Activated T-helper 1 cell treated with anti-CD3 and anti-CD28 coated beads, Interleukin-12 subunit alpha, Interleukin-12 subunit beta, Interleukin-2, Interleukin-4 antibody, amounts not matched to agents 30 ng/mL and 10 ng/mL and 1 ng/mL, durations not matched to agents 14 hours and 24 hours and 36 hours (primary cell): ENCODE measurements at regions of chr4 and their contacts with region 1.

Region 1: GRCh38 chr4:65651031-65651430 is 19.3 kb downstream of the EPHA5 start:
- DNase-seq: no peak
- H3K4me3 Mint-ChIP-seq: no peak overlapping the region
- H3K27ac Mint-ChIP-seq: no peak overlapping the region
- H3K4me1 Mint-ChIP-seq: no peaks in the 10 kb centered on the region
- H3K27me3 Mint-ChIP-seq: no peaks in the 10 kb centered on the region

Region 2: GRCh38 chr4:63965875-63966274 is 1685.2 kb before region 1 on chr4:
- intact Hi-C with region 1: loop called (anchors 5 kb)
- DNase-seq: no peak
- H3K4me3 Mint-ChIP-seq: no peak overlapping the region
- H3K27ac Mint-ChIP-seq: no peak overlapping the region
- H3K4me1 Mint-ChIP-seq: no peaks in the 10 kb centered on the region
- H3K27me3 Mint-ChIP-seq: no peaks in the 10 kb centered on the region

Region 3: DNA sequence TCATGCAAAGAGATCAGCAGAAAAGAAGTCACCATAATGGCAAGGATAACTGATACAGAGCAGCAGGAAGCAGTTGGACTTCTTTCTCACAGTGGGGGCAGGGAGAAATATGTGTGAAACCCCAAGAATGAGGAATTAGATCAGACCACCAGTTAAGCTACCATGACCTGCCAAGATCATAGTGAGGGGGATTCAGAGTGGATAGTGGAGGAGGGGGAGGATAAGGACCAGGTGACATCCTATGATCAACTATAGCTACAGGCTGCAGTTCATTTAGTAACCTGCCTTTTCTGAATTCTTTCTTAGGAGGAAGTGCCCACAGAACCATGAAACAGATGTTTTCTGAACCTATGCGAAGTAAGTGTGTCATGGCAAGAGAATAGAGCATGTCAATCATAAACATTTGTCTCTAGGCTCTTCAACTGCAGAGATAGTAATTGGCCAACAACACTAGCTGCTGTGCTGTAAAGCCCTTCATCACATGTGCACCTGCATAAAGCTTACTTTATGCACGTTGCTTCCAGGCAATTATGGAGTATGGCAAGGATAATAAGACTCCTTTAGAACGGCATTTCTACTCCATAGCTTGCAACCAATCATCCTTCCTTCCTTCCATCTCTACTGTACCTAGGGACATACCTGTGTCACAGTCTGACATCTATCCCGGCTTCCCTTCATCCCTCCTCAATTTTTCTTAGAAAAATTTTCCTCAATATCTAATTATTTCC is 310.5 kb before region 1 on chr4:
- intact Hi-C with region 1: no loop called
- DNase-seq: no peak
- H3K4me3 Mint-ChIP-seq: no peak overlapping the region
- H3K27ac Mint-ChIP-seq: no peak overlapping the region
- H3K4me1 Mint-ChIP-seq: no peaks in the 10 kb centered on the region
- H3K27me3 Mint-ChIP-seq: no peaks in the 10 kb centered on the region